CD8-positive, alpha-beta T cell (primary cell): ENCODE measurements at regions of chr17 and their contacts with region 1.

Region 1: DNA sequence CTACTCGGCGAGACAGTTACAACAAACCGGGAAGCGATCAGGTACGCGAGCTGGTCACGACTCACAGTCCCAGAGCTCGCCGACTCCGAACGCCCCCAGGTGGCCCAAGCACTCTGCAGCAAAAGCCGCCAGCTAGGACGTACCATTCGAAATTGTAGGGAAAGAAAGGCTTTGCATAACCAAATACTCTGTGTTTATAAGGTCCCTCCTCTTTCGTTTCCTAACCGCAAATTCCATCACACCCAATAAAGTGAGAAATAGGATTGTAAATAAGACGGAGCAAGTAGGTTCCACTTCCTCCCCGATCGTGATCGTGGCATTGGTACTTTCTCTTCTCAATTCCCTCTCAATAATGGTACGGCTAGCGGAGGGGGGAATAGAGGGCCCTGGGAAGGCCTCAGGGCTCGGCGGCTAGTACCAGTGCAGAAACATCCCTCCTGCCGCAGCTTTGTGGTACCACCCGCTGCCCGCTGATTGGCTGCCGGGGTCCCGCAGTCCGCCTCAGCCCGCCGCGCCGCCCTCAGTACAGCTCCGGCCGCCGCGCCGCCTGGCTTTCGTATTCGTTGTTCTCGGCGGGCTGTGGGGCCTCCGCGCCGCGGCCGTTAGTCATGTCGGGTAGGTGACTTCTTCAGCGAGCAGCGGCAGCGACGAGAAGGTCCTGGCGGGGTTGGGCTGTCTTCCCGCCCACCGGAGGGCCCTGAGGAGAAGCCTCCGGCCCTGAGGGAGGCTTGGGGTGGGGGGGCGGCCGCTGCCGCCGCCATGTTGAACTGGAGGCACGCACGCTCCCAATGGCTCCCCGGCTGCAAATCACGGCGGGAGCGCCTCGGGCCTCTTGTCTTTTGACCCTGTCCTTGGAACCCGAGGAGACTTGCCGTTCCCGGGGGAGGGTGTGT is at the start of gene TAF15:
- DNase-seq: peak; percentile 90 to 98 (median 95)
- ATAC-seq: peak; percentile 90
- H3K4me3 ChIP-seq: peak within 1 kb of the TSS; percentile 64 to 71
- H3K4me3 Mint-ChIP-seq: peak within 1 kb of the TSS; percentile 98
- H3K27ac ChIP-seq: peak within 1 kb of the TSS; percentile 77 to 92
- H3K27ac Mint-ChIP-seq: peak within 1 kb of the TSS; percentile 99
- H3K4me1 ChIP-seq: peaks cover 48% of the 10 kb centered on the region
- H3K4me1 Mint-ChIP-seq: peaks cover 68% of the 10 kb centered on the region
- H3K27me3 ChIP-seq: no peaks in the 10 kb centered on the region
- H3K27me3 Mint-ChIP-seq: no peaks in the 10 kb centered on the region
- CTCF ChIP-seq: peak; percentile 74
- total RNA-seq, gene TAF15: 118 to 121 TPM

Region 2: DNA sequence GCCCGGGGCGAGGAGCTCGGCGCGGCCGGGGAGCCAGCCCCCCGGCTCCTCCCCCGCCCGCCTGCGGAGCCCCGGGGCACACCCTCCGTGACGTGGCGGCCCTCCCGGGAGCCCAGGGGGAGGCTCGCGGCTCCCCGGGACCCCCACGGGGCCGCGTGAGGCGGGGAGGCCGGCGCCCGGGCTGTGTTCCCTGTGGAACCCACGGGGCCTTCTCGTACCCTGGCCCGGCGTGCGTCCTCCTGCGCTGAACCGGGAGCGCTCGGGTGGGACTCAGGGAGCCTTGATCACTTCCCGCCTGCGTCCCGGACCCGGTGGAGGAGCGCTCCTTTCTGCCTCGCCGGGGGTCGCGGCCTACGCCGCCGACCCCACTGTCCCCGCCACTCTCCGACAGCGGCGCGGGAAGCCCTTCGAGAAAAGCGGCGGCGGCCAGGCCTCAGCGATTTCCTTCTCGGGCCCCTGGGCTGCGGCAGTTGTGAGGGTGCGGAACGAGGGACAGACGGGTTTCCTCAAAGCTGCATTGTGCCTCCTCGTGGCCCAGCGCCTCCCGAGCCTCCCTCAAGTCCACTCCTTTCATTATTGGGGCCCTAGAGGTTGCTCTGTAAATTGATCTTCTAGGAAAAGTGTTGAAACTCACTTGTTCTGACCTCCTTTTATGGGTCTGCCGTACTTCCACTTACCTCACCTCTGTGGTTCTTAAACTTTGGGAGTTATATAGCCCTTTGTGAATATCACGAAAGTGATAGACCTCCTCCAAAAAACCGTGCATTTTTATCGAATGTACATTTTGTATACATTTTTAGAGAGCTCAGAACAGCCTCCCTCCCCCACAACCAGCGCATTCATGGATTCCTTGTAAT is 828.3 kb before region 1 on chr17:
- CTCF ChIA-PET with region 1: interaction called, 4 read pairs
- POLR2A ChIA-PET with region 1: no interaction called
- intact Hi-C with region 1: loop called in 1 of 2 experiments (anchors 1 kb)
- DNase-seq: peak in 8 of 9 experiments; percentile 13 to 90 (median 75)
- ATAC-seq: peak; percentile 84
- H3K4me3 ChIP-seq: peak overlapping the region; percentile 80 to 86
- H3K4me3 Mint-ChIP-seq: peak overlapping the region; percentile 92
- H3K27ac ChIP-seq: peak overlapping the region; percentile 93 to 98
- H3K27ac Mint-ChIP-seq: peak overlapping the region; percentile 98
- H3K4me1 ChIP-seq: peaks cover 26% of the 10 kb centered on the region
- H3K4me1 Mint-ChIP-seq: peaks cover 55% of the 10 kb centered on the region
- H3K27me3 ChIP-seq: no peaks in the 10 kb centered on the region
- H3K27me3 Mint-ChIP-seq: no peaks in the 10 kb centered on the region
- CTCF ChIP-seq: no peak

Region 3: DNA sequence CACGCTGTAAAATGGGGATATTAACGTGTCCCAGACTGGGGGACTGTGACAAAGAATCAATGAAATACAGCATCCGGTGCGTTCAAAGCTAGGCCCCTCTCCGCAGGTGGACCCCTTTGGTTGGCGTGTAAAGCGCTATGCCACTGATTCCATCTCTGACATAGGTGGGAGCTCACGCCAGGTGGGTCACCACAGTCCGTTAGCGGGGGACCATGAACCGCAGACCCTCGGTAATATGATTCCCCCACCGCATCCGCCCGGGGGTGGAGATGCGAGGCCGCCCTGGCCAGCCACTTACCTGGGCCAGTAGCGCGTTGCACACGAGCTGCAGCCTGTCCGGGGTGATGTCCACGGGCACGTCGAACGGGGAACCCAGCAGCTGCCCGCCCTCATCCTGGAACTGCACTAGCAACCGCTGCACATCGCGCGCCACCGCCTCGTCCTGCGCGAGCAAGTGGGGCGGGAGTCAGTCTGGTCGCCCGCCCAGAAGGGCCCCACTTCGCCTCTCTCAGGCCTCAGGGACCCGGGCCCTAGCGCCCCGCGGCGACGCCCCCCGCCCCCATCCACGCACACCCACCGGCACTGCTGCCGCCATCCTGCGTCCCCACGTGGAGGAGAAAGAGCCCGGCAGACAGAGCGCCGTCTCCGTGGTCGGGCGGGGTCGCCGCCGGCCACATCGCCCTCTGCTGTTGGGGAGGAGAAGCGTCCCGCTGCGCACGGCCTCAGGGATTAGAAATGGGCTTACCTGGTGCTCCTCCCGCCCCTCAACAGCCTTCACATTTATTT is 667.3 kb before region 1 on chr17 and contains the start of gene NLE1:
- CTCF ChIA-PET with region 1: interaction called, 3 read pairs
- POLR2A ChIA-PET with region 1: no interaction called
- intact Hi-C with region 1: loop called in 1 of 2 experiments (anchors 10 kb)
- DNase-seq: peak; percentile 82 to 93 (median 88)
- ATAC-seq: peak; percentile 97
- H3K4me3 ChIP-seq: peak within 1 kb of the TSS; percentile 98 to 99
- H3K4me3 Mint-ChIP-seq: peak within 1 kb of the TSS; percentile 85
- H3K27ac ChIP-seq: peak within 1 kb of the TSS; percentile 54 to 72
- H3K27ac Mint-ChIP-seq: peak within 1 kb of the TSS; percentile 76
- H3K4me1 ChIP-seq: peaks cover 8% of the 10 kb centered on the region
- H3K4me1 Mint-ChIP-seq: peaks cover 17% of the 10 kb centered on the region
- H3K27me3 ChIP-seq: no peaks in the 10 kb centered on the region
- H3K27me3 Mint-ChIP-seq: no peaks in the 10 kb centered on the region
- CTCF ChIP-seq: peak; percentile 97
- total RNA-seq, gene NLE1: 9.4 to 11.3 TPM

Region 4: DNA sequence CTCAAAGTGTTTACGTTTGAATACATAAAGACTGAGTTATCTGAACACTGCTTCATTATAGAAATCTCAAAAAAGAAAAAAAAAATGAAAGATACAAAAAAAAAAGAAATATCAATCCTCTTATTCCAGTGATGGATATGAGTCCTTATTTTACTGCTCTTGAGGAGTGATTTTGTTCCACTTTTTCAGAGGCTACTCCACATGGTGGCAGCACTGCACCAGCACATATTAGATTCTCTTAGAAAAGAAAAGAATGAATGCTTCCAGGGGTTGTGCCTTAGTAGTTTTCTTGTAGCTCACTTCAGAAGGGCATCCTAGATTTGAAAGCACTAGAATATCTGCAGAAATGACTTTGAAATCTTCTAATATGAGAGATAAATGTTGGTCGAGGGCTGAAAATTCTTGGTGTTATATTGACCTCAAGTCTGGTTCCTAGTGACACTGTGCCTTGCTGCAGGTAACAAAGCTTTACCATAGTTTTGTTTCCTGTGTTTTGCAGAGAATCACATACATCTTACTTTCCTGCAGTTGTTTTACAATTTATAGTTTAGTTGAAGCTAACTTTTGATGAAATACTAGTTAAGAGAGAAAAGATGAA is 196.2 kb before region 1 on chr17:
- CTCF ChIA-PET with region 1: interaction called, 3 read pairs
- POLR2A ChIA-PET with region 1: no interaction called
- intact Hi-C with region 1: loop called in 1 of 2 experiments (anchors 5 kb)
- DNase-seq: peak in 5 of 9 experiments; percentile 28 to 49 (median 34)
- ATAC-seq: peak; percentile 38
- H3K4me3 ChIP-seq: no peak overlapping the region
- H3K4me3 Mint-ChIP-seq: no peak overlapping the region
- H3K27ac ChIP-seq: no peak overlapping the region
- H3K27ac Mint-ChIP-seq: no peak overlapping the region
- H3K4me1 ChIP-seq: no peaks in the 10 kb centered on the region
- H3K4me1 Mint-ChIP-seq: peaks cover 5% of the 10 kb centered on the region
- H3K27me3 ChIP-seq: no peaks in the 10 kb centered on the region
- H3K27me3 Mint-ChIP-seq: no peaks in the 10 kb centered on the region
- CTCF ChIP-seq: peak; percentile 55

Region 5: GRCh38 chr17:35764123-35764991 is 44.9 kb before region 1 on chr17:
- CTCF ChIA-PET with region 1: interaction called, 305 read pairs
- POLR2A ChIA-PET with region 1: interaction called, 84 read pairs
- intact Hi-C with region 1: loop called (anchors 1 kb)
- DNase-seq: peak; percentile 67 to 95 (median 86)
- ATAC-seq: peak; percentile 89
- H3K4me3 ChIP-seq: peak overlapping the region; percentile 70 to 86
- H3K4me3 Mint-ChIP-seq: peak overlapping the region; percentile 91
- H3K27ac ChIP-seq: peak overlapping the region; percentile 16 to 65
- H3K27ac Mint-ChIP-seq: peak overlapping the region; percentile 87
- H3K4me1 ChIP-seq: peaks cover 8% of the 10 kb centered on the region
- H3K4me1 Mint-ChIP-seq: peaks cover 10% of the 10 kb centered on the region
- H3K27me3 ChIP-seq: no peaks in the 10 kb centered on the region
- H3K27me3 Mint-ChIP-seq: no peaks in the 10 kb centered on the region
- CTCF ChIP-seq: peak; percentile 58

Region 6: DNA sequence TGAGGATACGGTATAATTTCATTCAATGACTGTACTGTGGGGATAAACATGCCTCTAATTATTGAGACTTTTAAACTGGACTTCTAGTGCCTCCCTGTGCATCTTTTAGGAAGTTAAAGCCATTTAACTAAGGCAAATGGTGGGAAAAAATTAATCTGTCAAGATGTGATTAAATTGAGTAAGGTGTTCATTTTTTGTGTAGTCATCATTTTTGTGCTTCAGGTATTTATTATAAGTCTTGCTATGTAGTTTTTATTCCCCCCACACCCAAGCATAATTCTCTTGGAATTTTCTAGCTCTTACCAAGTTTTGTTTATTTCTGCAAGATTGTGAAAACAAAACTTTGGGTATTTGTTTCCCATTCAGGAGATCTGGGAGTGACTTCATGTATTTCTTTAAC is 10.2 kb after region 1 on chr17:
- CTCF ChIA-PET with region 1: interaction called, 30 read pairs
- POLR2A ChIA-PET with region 1: interaction called, 10 read pairs
- intact Hi-C with region 1: no loop called
- DNase-seq: no peak
- ATAC-seq: no peak
- H3K4me3 ChIP-seq: no peak overlapping the region
- H3K4me3 Mint-ChIP-seq: no peak overlapping the region
- H3K27ac ChIP-seq: no peak overlapping the region
- H3K27ac Mint-ChIP-seq: peak overlapping the region; percentile 64
- H3K4me1 ChIP-seq: peaks cover 5% of the 10 kb centered on the region
- H3K4me1 Mint-ChIP-seq: peaks cover 51% of the 10 kb centered on the region
- H3K27me3 ChIP-seq: no peaks in the 10 kb centered on the region
- H3K27me3 Mint-ChIP-seq: no peaks in the 10 kb centered on the region
- CTCF ChIP-seq: no peak

Region 7: GRCh38 chr17:36550491-36551417 is 741.5 kb after region 1 on chr17:
- CTCF ChIA-PET with region 1: no interaction called
- POLR2A ChIA-PET with region 1: no interaction called
- intact Hi-C with region 1: no loop called
- DNase-seq: peak in 2 of 9 experiments; percentile 39 to 65
- ATAC-seq: peak; percentile 45
- H3K4me3 ChIP-seq: no peak overlapping the region
- H3K4me3 Mint-ChIP-seq: peak overlapping the region; percentile 65
- H3K27ac ChIP-seq: peak overlapping the region in 1 of 2 experiments; percentile 18
- H3K27ac Mint-ChIP-seq: peak overlapping the region; percentile 81
- H3K4me1 ChIP-seq: peaks cover 88% of the 10 kb centered on the region
- H3K4me1 Mint-ChIP-seq: peaks cover 76% of the 10 kb centered on the region
- H3K27me3 ChIP-seq: no peaks in the 10 kb centered on the region
- H3K27me3 Mint-ChIP-seq: no peaks in the 10 kb centered on the region
- CTCF ChIP-seq: no peak